PC-3 (cell line): ENCODE measurements at regions of chr12 and their contacts with region 1.

Region 1: GRCh38 chr12:62799126-62799736 is 135.7 kb downstream of the PPM1H start:
- DNase-seq: peak; percentile 87
- ATAC-seq: peak; percentile 56
- H3K4me3 ChIP-seq: no peak overlapping the region
- H3K27ac ChIP-seq: peak overlapping the region; percentile 91
- H3K4me1 ChIP-seq: peaks cover 17% of the 10 kb centered on the region
- H3K27me3 ChIP-seq: no peaks in the 10 kb centered on the region
- CTCF ChIP-seq: peak; percentile 94

Region 2: GRCh38 chr12:62621101-62621638 is 178.1 kb before region 1 on chr12:
- CTCF ChIA-PET with region 1: no interaction called
- POLR2A ChIA-PET with region 1: no interaction called
- intact Hi-C with region 1: no loop called
- DNase-seq: no peak
- ATAC-seq: no peak
- H3K4me3 ChIP-seq: no peak overlapping the region
- H3K27ac ChIP-seq: no peak overlapping the region
- H3K4me1 ChIP-seq: no peaks in the 10 kb centered on the region
- H3K27me3 ChIP-seq: no peaks in the 10 kb centered on the region
- CTCF ChIP-seq: no peak

Region 3: DNA sequence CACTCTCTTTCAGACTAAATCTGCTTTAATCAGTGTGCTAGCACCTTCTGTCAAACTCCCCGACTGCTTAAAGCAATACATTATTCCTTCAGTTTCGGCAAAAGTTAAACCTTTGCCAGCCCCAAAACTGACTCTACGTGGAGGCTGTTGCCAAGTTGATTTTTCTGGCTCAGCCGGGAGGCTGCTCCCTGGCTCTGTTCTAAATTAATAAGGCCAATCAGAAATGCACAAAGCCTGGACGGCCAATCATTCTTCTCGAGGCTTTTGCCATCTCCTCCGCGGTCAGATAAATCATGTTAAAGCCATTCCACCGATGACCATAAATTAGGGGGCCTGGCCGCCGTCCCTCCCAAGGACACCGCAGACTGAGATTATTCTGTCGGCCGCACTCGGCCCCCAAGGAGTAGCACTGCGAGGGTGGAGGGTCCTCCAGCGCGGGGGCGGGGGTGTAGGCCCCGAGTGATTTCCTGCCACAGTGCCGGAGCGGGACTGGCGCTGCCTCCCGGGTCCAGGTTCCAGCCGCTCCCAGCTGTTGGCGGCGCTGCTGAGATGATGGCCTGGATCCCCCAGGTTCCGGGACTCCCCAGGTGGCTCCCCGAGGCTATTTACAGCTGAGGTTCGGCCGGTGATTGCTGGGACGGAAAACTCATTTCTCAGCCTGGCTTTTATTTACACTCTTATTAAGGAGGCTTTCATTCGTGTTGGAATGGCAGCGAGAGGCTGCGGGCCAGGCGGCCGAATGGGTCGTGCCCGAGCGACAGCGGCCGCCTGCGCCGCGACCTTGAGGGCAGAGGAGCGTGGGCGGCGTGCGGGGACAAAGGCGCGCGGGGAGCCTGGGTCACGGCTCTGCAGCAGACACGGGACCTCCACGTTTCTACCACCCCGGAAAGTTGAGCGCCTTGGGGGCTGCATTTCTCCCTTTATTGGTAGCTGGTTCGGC is 167.5 kb before region 1 on chr12:
- CTCF ChIA-PET with region 1: interaction called, 17 read pairs
- POLR2A ChIA-PET with region 1: interaction called, 5 read pairs
- intact Hi-C with region 1: no loop called
- DNase-seq: no peak
- ATAC-seq: peak; percentile 34
- H3K4me3 ChIP-seq: peak overlapping the region; percentile 56
- H3K27ac ChIP-seq: no peak overlapping the region
- H3K4me1 ChIP-seq: no peaks in the 10 kb centered on the region
- H3K27me3 ChIP-seq: no peaks in the 10 kb centered on the region
- CTCF ChIP-seq: no peak; the same call in 1 of the 2 replicates

Region 4: GRCh38 chr12:62692884-62693283 is 106.3 kb before region 1 on chr12:
- CTCF ChIA-PET with region 1: no interaction called
- POLR2A ChIA-PET with region 1: no interaction called
- intact Hi-C with region 1: no loop called
- DNase-seq: no peak
- ATAC-seq: no peak
- H3K4me3 ChIP-seq: no peak overlapping the region
- H3K27ac ChIP-seq: no peak overlapping the region
- H3K4me1 ChIP-seq: no peaks in the 10 kb centered on the region; the same call in 1 of the 2 replicates
- H3K27me3 ChIP-seq: no peaks in the 10 kb centered on the region
- CTCF ChIP-seq: no peak

Region 5: DNA sequence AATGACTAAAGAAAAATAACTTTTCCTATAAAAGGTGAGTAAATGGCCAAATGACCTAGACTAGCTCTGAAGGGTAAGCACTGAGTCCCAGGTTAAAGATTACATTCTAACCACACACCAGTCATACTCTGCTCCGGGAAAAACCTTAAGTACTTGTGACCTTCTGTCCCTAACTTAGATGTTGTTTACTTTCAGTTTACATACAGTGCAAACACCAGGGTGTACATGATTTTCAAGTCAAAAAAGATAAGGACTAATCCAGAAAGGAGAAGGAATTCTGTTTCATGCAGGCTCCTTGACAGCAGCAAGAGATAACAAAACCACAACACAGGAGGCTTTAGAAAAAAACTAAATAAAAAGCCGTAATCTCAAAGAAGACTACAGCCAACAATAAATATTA is 38.5 kb before region 1 on chr12:
- CTCF ChIA-PET with region 1: no interaction called
- POLR2A ChIA-PET with region 1: no interaction called
- intact Hi-C with region 1: no loop called
- DNase-seq: no peak
- ATAC-seq: peak; percentile 27
- H3K4me3 ChIP-seq: no peak overlapping the region
- H3K27ac ChIP-seq: no peak overlapping the region
- H3K4me1 ChIP-seq: peaks cover 25% of the 10 kb centered on the region
- H3K27me3 ChIP-seq: no peaks in the 10 kb centered on the region
- CTCF ChIP-seq: no peak

Region 6: DNA sequence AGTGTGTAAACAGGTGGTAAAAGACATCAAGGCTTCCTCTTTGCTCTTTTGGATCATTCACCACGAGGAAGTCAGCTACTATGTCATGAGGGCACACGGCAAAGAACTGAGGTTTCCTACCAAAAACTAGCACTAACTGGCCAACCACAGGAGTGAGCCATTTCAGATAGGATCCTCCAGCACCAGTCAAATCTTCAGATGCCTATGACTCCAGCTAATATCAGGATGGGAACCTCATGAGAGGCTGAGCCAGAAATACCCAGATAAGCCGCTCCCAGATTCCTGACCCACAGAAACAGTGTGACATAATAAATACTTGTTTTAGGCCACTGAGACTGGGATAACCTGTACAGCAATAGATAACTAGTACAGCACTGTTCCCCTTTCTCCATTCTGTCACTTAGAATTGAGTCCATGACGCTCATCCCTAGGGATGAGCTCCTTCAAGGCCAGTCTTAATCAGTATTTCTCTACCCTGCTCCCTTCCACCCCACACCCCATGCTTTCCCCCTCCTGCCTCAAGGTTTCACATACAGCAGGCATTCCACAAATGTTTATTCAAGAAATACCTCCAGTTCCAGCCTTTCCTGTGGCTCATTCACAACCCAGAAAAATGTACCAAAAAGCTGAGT is 67.3 kb after region 1 on chr12:
- CTCF ChIA-PET with region 1: interaction called, 4 read pairs
- POLR2A ChIA-PET with region 1: no interaction called
- intact Hi-C with region 1: loop called (anchors 5 kb)
- DNase-seq: peak; percentile 81
- ATAC-seq: peak; percentile 82
- H3K4me3 ChIP-seq: no peak overlapping the region
- H3K27ac ChIP-seq: peak overlapping the region; percentile 42
- H3K4me1 ChIP-seq: peaks cover 56% of the 10 kb centered on the region
- H3K27me3 ChIP-seq: no peaks in the 10 kb centered on the region
- CTCF ChIP-seq: no peak

Region 7: DNA sequence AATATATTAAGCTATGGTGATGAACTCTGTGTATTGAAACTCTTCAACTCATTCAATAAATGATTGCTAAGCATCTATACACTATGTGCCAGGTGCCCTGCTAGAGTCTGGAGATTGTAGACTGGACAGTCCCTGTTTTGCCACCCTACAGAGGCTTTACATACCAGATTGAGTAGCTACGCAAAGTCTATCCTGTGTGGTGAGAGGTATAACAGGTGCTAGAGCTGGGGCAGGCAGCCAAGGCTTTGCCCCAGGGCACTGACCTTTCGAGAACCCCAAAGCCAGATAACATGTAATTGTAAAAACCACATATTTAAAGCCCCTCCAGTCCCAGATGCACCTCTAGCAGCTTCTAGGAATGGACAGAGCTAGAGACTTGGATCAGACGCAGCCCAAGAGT is 82.9 kb after region 1 on chr12:
- CTCF ChIA-PET with region 1: no interaction called
- POLR2A ChIA-PET with region 1: interaction called, 12 read pairs
- intact Hi-C with region 1: no loop called
- DNase-seq: no peak
- ATAC-seq: no peak
- H3K4me3 ChIP-seq: no peak overlapping the region
- H3K27ac ChIP-seq: no peak overlapping the region
- H3K4me1 ChIP-seq: peaks cover 7% of the 10 kb centered on the region; the same call in 1 of the 2 replicates
- H3K27me3 ChIP-seq: no peaks in the 10 kb centered on the region
- CTCF ChIP-seq: no peak

Region 8: DNA sequence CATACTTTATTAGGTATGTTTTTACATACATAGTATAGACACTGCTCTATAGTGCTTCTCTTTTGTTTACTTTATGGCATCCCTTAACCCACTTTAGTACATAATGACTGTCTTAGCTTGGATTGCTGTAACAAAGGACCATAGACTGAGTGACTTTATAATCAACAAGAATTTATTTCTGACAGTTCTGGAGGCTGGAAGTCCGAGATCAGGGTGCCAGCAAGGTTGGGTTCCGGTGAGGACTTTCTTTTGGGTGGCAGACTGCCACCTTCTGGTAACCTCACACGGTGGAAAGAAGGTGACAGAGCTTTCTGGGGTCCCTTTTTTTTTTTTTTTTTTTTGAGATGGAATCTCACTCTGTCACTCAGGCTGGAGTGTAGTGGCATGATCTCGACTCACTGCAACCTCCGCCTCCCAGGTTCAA is 184.4 kb after region 1 on chr12:
- CTCF ChIA-PET with region 1: no interaction called
- POLR2A ChIA-PET with region 1: no interaction called
- intact Hi-C with region 1: loop called (anchors 5 kb)
- DNase-seq: peak; percentile 39
- ATAC-seq: no peak; the same call in 1 of the 2 replicates
- H3K4me3 ChIP-seq: no peak overlapping the region
- H3K27ac ChIP-seq: no peak overlapping the region
- H3K4me1 ChIP-seq: peaks cover 24% of the 10 kb centered on the region
- H3K27me3 ChIP-seq: no peaks in the 10 kb centered on the region
- CTCF ChIP-seq: peak; percentile 56

Region 9: GRCh38 chr12:63068857-63069442 is 269.7 kb after region 1 on chr12:
- CTCF ChIA-PET with region 1: interaction called, 16 read pairs
- POLR2A ChIA-PET with region 1: interaction called, 5 read pairs
- intact Hi-C with region 1: loop called (anchors 1 kb)
- DNase-seq: peak; percentile 87
- ATAC-seq: peak; percentile 48
- H3K4me3 ChIP-seq: no peak overlapping the region
- H3K27ac ChIP-seq: no peak overlapping the region
- H3K4me1 ChIP-seq: peaks cover 12% of the 10 kb centered on the region
- H3K27me3 ChIP-seq: no peaks in the 10 kb centered on the region
- CTCF ChIP-seq: peak; percentile 88